Activated CD4-positive, alpha-beta T cell treated with anti-CD3 and anti-CD28 coated beads, Interleukin-2, amount 10 ng/mL, durations not matched to agents 24 days and 14 days (primary cell): ENCODE measurements at regions of chr5 and their contacts with region 1.

Region 1: DNA sequence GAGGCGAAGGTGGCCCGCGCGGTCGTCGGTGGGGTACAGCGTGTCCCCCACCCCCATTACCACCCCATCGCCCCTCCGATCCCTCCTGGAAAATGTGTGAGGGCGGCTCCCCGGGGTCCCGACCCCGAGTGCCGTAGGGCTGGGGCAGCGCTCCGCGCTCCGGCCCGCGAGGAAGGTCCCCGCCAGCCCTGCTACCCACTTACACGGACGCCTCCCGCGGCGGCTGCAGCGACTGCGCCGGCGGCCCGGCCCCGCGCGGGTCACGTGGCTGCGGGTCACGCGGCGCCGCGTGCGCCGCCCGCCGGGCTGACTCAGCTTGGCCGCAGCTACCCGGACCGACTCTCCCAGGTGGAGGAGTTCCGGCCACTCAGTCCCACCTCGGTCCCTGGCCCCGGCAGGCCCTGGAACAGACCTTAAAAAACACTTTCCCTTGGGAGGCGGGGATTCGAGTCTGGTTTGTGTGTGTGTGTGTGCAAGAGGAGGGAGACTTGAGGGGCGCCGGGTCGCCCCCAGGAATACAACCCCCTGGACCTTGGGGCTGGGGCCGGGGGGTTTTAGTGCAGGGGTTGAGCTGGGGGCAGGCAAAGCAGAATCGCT is at the start of gene GNPDA1:
- DNase-seq: peak; percentile 93
- H3K4me3 Mint-ChIP-seq: peak within 1 kb of the TSS; percentile 90
- H3K27ac Mint-ChIP-seq: peak within 1 kb of the TSS; percentile 94
- H3K4me1 Mint-ChIP-seq: peaks cover 77% of the 10 kb centered on the region
- H3K27me3 Mint-ChIP-seq: no peaks in the 10 kb centered on the region
- total RNA-seq, gene GNPDA1: 108 and 114 TPM in 2 replicates

Region 2: GRCh38 chr5:141564216-141564692 is 448.6 kb before region 1 on chr5:
- intact Hi-C with region 1: no loop called
- DNase-seq: peak; percentile 92
- H3K4me3 Mint-ChIP-seq: no peak overlapping the region
- H3K27ac Mint-ChIP-seq: peak overlapping the region; percentile 86
- H3K4me1 Mint-ChIP-seq: peaks cover 32% of the 10 kb centered on the region
- H3K27me3 Mint-ChIP-seq: no peaks in the 10 kb centered on the region

Region 3: DNA sequence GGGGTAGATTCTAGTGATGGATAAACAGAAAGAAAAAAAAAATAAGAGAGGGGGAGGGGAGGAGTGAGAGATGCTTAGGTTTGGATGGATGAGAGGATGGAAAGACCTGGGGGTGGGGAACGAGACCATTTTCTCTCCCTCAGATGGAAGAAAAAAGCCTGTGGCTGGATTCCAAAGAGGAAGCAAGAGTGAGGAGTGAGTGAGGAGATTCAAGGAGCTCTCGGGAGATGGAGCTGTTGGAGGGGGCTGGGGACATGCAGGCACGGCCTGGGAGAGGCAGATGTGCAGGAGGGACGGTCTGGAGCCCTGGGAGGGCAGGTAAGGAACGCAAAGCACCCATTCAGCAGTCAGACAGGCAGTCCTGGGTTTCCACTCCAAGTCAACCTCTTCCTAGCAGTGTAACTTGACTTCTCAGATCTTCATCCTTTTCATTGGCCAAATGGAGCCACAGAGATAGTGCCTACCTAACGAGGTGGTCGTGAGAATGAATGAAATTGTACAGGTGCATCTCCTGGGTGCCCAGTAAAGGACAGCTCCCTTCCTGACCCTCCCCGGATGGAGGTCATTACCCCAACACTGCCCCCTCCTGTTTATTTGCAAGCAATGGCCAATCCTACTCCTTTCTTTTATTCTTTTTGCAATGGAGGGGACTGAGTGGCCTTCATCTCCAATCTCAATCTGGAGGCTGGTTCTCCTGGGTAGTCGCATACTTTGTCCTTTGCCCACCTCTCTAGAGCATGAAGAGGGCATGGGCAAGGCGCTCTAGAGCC is 186.9 kb before region 1 on chr5:
- intact Hi-C with region 1: no loop called
- DNase-seq: peak; percentile 63
- H3K4me3 Mint-ChIP-seq: no peak overlapping the region
- H3K27ac Mint-ChIP-seq: no peak overlapping the region
- H3K4me1 Mint-ChIP-seq: no peaks in the 10 kb centered on the region
- H3K27me3 Mint-ChIP-seq: peaks cover 23% of the 10 kb centered on the region

Region 4: GRCh38 chr5:141923448-141924352 is 89.2 kb before region 1 on chr5 and contains the start of gene DELE1:
- intact Hi-C with region 1: loop called (anchors 5 kb)
- DNase-seq: peak; percentile 97
- H3K4me3 Mint-ChIP-seq: peak within 1 kb of the TSS; percentile 86
- H3K27ac Mint-ChIP-seq: peak within 1 kb of the TSS; percentile 87
- H3K4me1 Mint-ChIP-seq: peaks cover 31% of the 10 kb centered on the region
- H3K27me3 Mint-ChIP-seq: no peaks in the 10 kb centered on the region
- total RNA-seq, gene DELE1: 66.7 and 72.0 TPM in 2 replicates

Region 5: GRCh38 chr5:141951332-141951781 is 61.5 kb before region 1 on chr5:
- intact Hi-C with region 1: no loop called
- DNase-seq: peak; percentile 73
- H3K4me3 Mint-ChIP-seq: no peak overlapping the region
- H3K27ac Mint-ChIP-seq: peak overlapping the region; percentile 4
- H3K4me1 Mint-ChIP-seq: peaks cover 20% of the 10 kb centered on the region
- H3K27me3 Mint-ChIP-seq: no peaks in the 10 kb centered on the region

Region 6: GRCh38 chr5:141992349-141992963 is 20.4 kb before region 1 on chr5:
- intact Hi-C with region 1: loop called (anchors 1 kb)
- DNase-seq: peak; percentile 93
- H3K4me3 Mint-ChIP-seq: no peak overlapping the region
- H3K27ac Mint-ChIP-seq: no peak overlapping the region
- H3K4me1 Mint-ChIP-seq: peaks cover 3% of the 10 kb centered on the region
- H3K27me3 Mint-ChIP-seq: no peaks in the 10 kb centered on the region

Region 7: DNA sequence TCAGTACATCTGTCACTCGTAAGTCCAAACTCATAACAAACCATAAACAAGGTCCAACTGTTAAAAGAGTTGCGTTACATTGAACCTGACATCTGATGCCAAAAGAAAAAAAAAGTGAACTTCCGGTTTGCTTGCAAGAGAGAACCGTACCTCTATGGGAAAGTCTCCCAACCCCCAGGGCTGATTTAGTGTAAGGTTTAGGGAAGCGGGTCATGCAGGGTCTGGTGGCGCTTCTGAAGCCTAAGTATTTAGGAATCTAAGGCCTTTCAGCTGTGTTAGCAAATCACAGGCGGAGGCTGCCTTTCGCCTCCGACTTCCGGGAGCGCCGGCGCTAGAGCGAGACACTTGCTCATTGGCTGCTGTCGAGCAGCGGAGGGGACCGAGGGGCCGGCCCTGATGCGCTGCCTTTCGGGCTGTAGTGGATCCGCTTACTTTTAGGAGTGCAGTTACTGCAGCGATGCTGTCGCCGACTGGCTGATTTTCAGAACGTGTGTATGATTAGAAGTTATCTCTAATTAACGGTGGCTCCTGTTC is 11.9 kb after region 1 on chr5:
- intact Hi-C with region 1: loop called (anchors 1 kb)
- DNase-seq: peak; percentile 96
- H3K4me3 Mint-ChIP-seq: peak overlapping the region; percentile 90
- H3K27ac Mint-ChIP-seq: peak overlapping the region; percentile 98
- H3K4me1 Mint-ChIP-seq: peaks cover 14% of the 10 kb centered on the region
- H3K27me3 Mint-ChIP-seq: no peaks in the 10 kb centered on the region

Region 8: DNA sequence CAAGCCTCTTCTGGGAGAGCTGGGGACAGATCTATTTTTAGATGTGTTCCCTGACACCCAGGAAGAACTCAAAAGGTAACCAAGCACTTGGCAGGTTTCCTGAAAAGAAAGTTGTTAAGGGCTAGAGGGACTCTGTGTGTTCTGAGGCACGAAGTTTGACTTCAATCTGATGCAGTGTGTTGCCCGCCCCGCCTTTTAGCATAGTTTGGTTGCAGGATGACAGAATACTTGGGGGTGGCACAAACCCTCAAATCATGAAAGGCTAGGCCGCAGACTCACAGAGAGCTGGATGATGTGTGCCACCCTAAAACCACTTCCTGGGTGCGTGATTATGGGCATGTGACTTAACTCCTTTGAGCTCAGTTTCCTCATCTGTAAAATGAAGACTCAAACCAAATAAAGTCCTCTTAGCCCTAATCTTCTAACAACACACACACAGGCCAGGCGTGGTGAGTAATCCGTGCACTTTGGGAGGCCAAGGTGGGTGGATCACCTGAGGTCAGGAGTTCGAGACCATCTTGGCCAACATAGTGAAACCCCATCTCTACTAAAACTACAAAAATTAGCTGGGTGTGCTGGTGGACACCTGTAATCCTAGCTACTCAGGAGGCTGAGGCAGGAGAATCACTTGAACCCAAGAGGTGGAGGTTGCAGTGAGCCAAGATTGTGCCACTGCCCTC is 82.9 kb after region 1 on chr5:
- intact Hi-C with region 1: loop called (anchors 1 kb)
- DNase-seq: peak; percentile 89
- H3K4me3 Mint-ChIP-seq: peak overlapping the region; percentile 53
- H3K27ac Mint-ChIP-seq: peak overlapping the region; percentile 93
- H3K4me1 Mint-ChIP-seq: peaks cover 46% of the 10 kb centered on the region
- H3K27me3 Mint-ChIP-seq: no peaks in the 10 kb centered on the region

Region 9: GRCh38 chr5:142145106-142145900 is 132.4 kb after region 1 on chr5:
- intact Hi-C with region 1: loop called (anchors 1 kb)
- DNase-seq: peak; percentile 89
- H3K4me3 Mint-ChIP-seq: no peak overlapping the region
- H3K27ac Mint-ChIP-seq: no peak overlapping the region
- H3K4me1 Mint-ChIP-seq: no peaks in the 10 kb centered on the region
- H3K27me3 Mint-ChIP-seq: no peaks in the 10 kb centered on the region